ENCODE measurements at regions of chr3 and their contacts with region 1.

Region 1: DNA sequence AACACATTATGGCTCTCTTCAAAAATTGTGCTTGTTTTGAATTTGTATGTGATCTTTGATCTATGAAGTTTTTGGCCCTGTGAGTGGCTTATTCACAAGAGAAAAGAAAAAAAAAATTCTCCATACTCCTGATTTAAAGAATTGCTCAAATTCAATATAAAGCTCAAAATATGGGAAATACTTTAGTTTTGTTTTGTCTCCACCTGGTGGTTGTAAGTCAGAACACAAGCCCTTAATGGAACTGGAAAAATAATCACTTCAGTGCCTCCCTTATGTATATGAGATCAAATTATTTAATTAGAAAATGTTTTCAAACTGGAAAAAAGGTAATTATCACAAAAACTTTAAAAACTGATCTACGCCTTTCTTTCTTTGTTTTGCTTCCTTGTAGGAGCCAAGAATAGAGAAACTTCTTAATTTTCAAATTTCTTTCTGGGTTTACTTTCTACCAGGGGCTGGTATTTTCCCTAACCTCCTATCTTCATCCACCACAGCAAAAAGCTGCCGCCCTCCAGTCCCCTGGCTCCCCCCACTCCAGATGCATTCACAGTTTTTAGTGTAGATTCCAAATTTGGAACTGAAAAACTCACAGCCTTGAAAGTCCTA is 50.6 kb downstream of the SERP1 start:
- DNase-seq: peak; percentile 73
- H3K4me3 ChIP-seq: no peak overlapping the region
- H3K27ac ChIP-seq: no peak overlapping the region
- H3K4me1 ChIP-seq: no peaks in the 10 kb centered on the region
- H3K27me3 ChIP-seq: no peaks in the 10 kb centered on the region
- CTCF ChIP-seq: peak; percentile 75

Region 2: DNA sequence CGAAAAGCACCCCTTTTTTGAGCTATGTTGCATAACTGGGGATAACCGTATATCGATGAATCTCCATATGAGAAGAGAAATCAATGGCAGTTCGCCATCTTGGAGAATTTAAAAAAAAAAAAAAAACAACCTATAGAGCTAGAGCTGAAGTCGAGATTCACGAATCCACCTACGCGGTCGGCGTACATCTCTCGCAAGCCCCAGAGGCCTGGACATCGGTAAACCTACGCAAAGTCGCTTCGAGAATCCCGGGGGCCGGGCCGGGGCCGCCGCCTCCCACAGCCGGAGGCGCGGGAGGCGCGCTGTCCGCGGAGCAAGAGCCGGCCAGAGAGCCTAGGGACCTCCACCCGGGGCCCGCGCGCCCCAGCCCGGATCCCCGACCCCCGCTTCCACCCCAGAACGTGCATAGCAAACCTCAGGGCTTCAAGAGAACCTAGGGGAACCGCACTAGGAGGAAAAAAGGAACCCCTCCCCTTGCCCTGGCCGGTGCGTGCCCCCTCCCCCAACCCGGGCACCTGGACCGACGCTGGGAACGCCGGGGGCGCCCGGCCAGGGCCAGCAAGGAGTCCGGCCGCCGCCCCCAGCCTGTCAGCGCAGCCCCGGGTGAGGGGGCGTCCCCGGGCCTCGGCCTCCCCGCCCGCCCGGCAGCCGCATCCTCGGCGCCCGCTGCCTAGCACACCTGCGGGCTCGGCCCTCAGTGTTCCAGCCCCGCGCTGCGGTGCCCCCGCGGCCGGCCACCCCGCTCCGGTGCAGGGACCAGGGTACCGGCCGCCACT is 525.5 kb before region 1 on chr3:
- CTCF ChIA-PET with region 1: no interaction called
- POLR2A ChIA-PET with region 1: no interaction called
- intact Hi-C with region 1: loop called (anchors 10 kb)
- DNase-seq: peak; percentile 91
- H3K4me3 ChIP-seq: peak overlapping the region; percentile 83
- H3K27ac ChIP-seq: peak overlapping the region; percentile 95
- H3K4me1 ChIP-seq: peaks cover 29% of the 10 kb centered on the region
- H3K27me3 ChIP-seq: no peaks in the 10 kb centered on the region
- CTCF ChIP-seq: no peak

Region 3: DNA sequence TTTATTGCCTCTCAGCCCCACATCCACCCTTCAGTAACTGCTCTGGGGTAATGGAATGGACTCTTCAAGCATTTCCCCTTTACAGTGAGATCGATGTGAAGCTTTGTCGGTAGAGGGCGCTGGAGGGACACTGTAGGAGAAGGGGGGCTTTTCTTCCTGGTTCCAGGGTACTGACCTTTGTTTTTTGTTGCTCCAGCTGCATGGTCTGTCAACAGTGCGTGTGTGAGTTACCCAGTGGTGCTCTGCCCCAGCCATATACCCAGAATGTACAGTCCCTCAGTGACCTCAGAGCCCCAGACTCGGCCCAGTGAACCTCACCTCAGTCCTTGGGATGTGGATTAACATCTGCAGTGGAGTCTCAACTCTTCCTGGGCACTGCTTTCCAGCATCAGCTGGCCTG is 267.8 kb before region 1 on chr3:
- CTCF ChIA-PET with region 1: interaction called, 10 read pairs
- POLR2A ChIA-PET with region 1: no interaction called
- intact Hi-C with region 1: loop called (anchors 2 kb)
- DNase-seq: peak; percentile 86
- H3K4me3 ChIP-seq: no peak overlapping the region
- H3K27ac ChIP-seq: no peak overlapping the region
- H3K4me1 ChIP-seq: peaks cover 8% of the 10 kb centered on the region
- H3K27me3 ChIP-seq: no peaks in the 10 kb centered on the region
- CTCF ChIP-seq: peak; percentile 93

Region 4: GRCh38 chr3:150286390-150287147 is 209.1 kb before region 1 on chr3:
- CTCF ChIA-PET with region 1: interaction called, 7 read pairs
- POLR2A ChIA-PET with region 1: no interaction called
- intact Hi-C with region 1: loop called (anchors 5 kb)
- DNase-seq: peak; percentile 60
- H3K4me3 ChIP-seq: no peak overlapping the region
- H3K27ac ChIP-seq: no peak overlapping the region
- H3K4me1 ChIP-seq: no peaks in the 10 kb centered on the region
- H3K27me3 ChIP-seq: no peaks in the 10 kb centered on the region
- CTCF ChIP-seq: peak; percentile 64

Region 5: GRCh38 chr3:150449169-150449721 is 46.4 kb before region 1 on chr3:
- CTCF ChIA-PET with region 1: no interaction called
- POLR2A ChIA-PET with region 1: interaction called, 20 read pairs
- intact Hi-C with region 1: no loop called
- DNase-seq: peak; percentile 42
- H3K4me3 ChIP-seq: no peak overlapping the region
- H3K27ac ChIP-seq: no peak overlapping the region
- H3K4me1 ChIP-seq: peaks cover 36% of the 10 kb centered on the region
- H3K27me3 ChIP-seq: no peaks in the 10 kb centered on the region
- CTCF ChIP-seq: no peak